Prostate gland (tissue), 2 donors: ENCODE measurements at regions of chr1 and their contacts with region 1.

Region 1: GRCh38 chr1:184329962-184330868 is 56.6 kb upstream of the C1orf21 start:
- DNase-seq: no peak
- H3K4me3 ChIP-seq: no peak overlapping the region
- H3K27ac ChIP-seq: peak overlapping the region in 1 of 2 donors; percentile 45
- H3K4me1 ChIP-seq: no peaks in the 10 kb centered on the region
- H3K27me3 ChIP-seq: no peaks in the 10 kb centered on the region
- CTCF ChIP-seq: no peak
- POLR2A ChIP-seq: no peak

Region 2: GRCh38 chr1:184379111-184379946 is 49.1 kb after region 1 on chr1:
- intact Hi-C with region 1: loop called (anchors 5 kb)
- DNase-seq: no peak
- H3K4me3 ChIP-seq: no peak overlapping the region
- H3K27ac ChIP-seq: no peak overlapping the region
- H3K4me1 ChIP-seq: no peaks in the 10 kb centered on the region
- H3K27me3 ChIP-seq: no peaks in the 10 kb centered on the region
- CTCF ChIP-seq: peak in 1 of 4 experiments; percentile 27
- POLR2A ChIP-seq: no peak